Activated naive CD4-positive, alpha-beta T cell treated with anti-CD3 and anti-CD28 coated beads for 36 hours (primary cell): ENCODE measurements at regions of chr4 and their contacts with region 1.

Region 1: GRCh38 chr4:87465739-87466366 is 43.5 kb downstream of the NUDT9 start:
- DNase-seq: no peak
- H3K4me3 Mint-ChIP-seq: no peak overlapping the region
- H3K27ac Mint-ChIP-seq: no peak overlapping the region
- H3K4me1 Mint-ChIP-seq: no peaks in the 10 kb centered on the region
- H3K27me3 Mint-ChIP-seq: no peaks in the 10 kb centered on the region

Region 2: GRCh38 chr4:87235020-87235671 is 230.7 kb before region 1 on chr4:
- CTCF ChIA-PET with region 1: no interaction called
- intact Hi-C with region 1: loop called (anchors 2 kb)
- DNase-seq: no peak
- H3K4me3 Mint-ChIP-seq: no peak overlapping the region
- H3K27ac Mint-ChIP-seq: no peak overlapping the region
- H3K4me1 Mint-ChIP-seq: no peaks in the 10 kb centered on the region
- H3K27me3 Mint-ChIP-seq: peaks cover 2% of the 10 kb centered on the region

Region 3: GRCh38 chr4:87270144-87270543 is 195.7 kb before region 1 on chr4:
- CTCF ChIA-PET with region 1: no interaction called
- intact Hi-C with region 1: loop called (anchors 1 kb)
- DNase-seq: peak; percentile 14
- H3K4me3 Mint-ChIP-seq: no peak overlapping the region
- H3K27ac Mint-ChIP-seq: no peak overlapping the region
- H3K4me1 Mint-ChIP-seq: no peaks in the 10 kb centered on the region
- H3K27me3 Mint-ChIP-seq: peaks cover 3% of the 10 kb centered on the region

Region 4: DNA sequence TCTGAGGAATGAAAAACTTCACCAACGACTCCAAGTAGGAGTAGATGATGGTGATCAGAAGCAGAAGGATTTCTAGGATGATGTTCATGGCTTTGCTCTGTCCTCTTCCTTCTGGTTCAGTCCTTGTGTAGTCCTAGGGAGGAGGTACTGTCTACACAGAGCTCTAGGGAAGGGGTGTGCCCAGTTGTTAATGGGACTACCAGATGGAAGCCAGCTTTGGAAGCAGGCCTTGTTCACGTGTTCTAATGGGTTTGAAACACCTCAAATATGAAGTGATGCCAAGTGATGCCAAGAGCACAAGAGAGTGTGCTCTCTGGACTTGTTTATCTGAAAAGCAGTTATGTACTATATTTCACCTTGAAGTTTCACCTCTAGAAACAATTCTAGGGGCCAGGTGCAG is 143.1 kb before region 1 on chr4 and contains the start of gene HSD17B13:
- CTCF ChIA-PET with region 1: no interaction called
- intact Hi-C with region 1: no loop called
- DNase-seq: no peak
- H3K4me3 Mint-ChIP-seq: no peak within 1 kb of the TSS
- H3K27ac Mint-ChIP-seq: no peak within 1 kb of the TSS
- H3K4me1 Mint-ChIP-seq: no peaks in the 10 kb centered on the region
- H3K27me3 Mint-ChIP-seq: no peaks in the 10 kb centered on the region
- total RNA-seq, gene HSD17B13: 0.10 to 0.12 TPM

Region 5: DNA sequence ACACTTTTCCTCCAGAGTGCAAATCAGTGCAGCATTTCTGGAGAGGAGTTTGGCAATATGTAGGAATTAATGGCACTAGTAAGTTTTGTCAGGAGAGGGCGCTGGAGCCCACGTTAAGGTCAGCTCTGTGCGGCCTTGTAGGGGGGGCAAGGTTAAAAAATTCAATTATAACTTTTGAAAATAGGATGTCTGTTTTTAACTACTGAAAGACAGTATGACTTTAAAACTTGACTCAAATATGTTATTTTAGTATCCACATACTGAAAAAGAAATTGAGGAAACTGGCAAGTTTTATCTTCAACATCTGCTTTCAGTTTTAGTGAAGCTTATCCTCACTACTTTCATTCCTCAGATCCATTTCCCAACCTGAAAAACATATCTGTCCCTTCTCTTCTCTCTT is 112.3 kb before region 1 on chr4:
- CTCF ChIA-PET with region 1: interaction called, 5 read pairs
- intact Hi-C with region 1: loop called (anchors 5 kb)
- DNase-seq: peak; percentile 50
- H3K4me3 Mint-ChIP-seq: no peak overlapping the region
- H3K27ac Mint-ChIP-seq: no peak overlapping the region
- H3K4me1 Mint-ChIP-seq: no peaks in the 10 kb centered on the region
- H3K27me3 Mint-ChIP-seq: no peaks in the 10 kb centered on the region

Region 6: GRCh38 chr4:89021684-89022083 is 1555.8 kb after region 1 on chr4:
- CTCF ChIA-PET with region 1: no interaction called
- intact Hi-C with region 1: no loop called
- DNase-seq: no peak
- H3K4me3 Mint-ChIP-seq: no peak overlapping the region
- H3K27ac Mint-ChIP-seq: no peak overlapping the region
- H3K4me1 Mint-ChIP-seq: peaks cover 4% of the 10 kb centered on the region
- H3K27me3 Mint-ChIP-seq: no peaks in the 10 kb centered on the region